Ascending aorta (tissue), 2 donors: ENCODE measurements at regions of chr7 and their contacts with region 1.

Region 1: GRCh38 chr7:26200444-26201246 is at the start of gene HNRNPA2B1:
- DNase-seq: peak; percentile 93 to 99
- H3K4me3 ChIP-seq: peak within 1 kb of the TSS; percentile 84 to 95
- H3K27ac ChIP-seq: peak within 1 kb of the TSS; percentile 99 to 100
- H3K4me1 ChIP-seq: peaks cover 0 to 43% of the 10 kb centered on the region in 2 donors
- H3K27me3 ChIP-seq: no peaks in the 10 kb centered on the region
- CTCF ChIP-seq: no peak
- total RNA-seq, gene HNRNPA2B1: 57.0 TPM

Region 2: DNA sequence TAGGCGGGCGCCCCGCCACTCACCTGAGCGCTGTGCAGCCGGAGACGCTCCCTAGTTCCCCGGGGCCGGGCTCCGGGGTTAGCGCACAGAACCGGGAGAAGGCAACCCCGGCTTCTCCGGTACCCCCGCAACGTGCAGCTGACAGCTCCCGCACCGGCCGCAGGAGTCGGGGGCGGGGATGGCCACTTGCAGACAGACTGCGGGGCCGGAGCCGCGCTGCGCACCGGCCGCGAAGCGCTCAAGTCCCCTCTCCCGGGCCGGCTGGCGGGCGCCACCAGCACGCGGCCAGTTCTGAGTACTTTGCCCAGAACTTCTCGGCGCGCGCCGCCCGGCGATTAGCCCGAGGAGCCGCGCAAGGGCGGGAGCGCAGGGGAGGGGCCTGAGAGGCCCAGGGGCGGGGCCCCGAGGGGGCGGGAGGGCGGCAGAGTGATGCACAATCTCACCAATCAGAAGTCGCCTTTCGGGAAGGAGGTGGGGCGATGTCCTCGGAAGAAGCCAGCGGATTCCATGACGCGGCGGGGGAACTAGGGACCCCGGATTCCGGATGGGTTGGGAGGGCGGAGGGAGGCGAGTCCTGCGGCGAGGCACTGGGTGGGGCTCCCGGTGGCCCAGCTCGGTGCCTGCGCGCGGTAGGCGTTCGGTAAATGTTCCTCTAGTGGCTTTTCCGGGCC is 1220.6 kb before region 1 on chr7 and contains the start of gene OSBPL3:
- intact Hi-C with region 1: loop called (anchors 10 kb)
- DNase-seq: peak; percentile 77 to 97
- H3K4me3 ChIP-seq: peak within 1 kb of the TSS; percentile 66 to 94
- H3K27ac ChIP-seq: peak within 1 kb of the TSS; percentile 66 to 83
- H3K4me1 ChIP-seq: peaks cover 0 to 3% of the 10 kb centered on the region in 2 donors
- H3K27me3 ChIP-seq: no peaks in the 10 kb centered on the region
- CTCF ChIP-seq: no peak
- total RNA-seq, gene OSBPL3: 0.96 TPM

Region 3: DNA sequence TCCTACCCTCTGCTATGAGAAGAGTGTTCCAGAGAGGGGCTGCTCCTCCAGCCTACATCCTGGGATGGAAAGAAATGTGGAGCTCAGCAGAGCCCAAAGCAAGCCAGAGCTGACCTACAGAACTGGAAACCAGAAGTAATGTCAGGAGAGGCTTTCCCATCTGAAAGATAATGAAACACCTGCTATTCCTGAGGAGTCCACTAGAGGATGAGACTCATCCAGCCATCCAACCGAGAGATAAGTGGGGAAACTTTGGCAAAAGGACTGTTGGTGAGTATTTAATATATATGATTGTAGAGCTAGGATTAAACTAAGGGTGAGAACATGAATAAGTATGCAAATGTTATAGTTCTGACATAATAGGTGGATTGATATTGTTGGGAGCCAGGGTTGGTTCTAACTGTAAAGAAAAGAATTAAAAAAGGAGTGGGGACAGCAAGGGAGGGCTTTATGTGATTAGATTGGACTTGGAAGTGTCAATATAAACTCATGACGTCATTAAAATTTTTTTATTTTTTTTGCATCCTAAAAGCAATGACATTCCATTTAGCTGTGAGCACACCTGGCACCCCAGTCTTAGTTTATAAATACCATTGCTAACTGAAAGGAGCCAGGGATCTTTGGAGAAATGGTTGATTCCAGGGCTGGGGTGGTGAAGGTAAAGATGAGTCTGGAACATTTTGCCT is 361.4 kb before region 1 on chr7:
- intact Hi-C with region 1: no loop called
- DNase-seq: no peak
- H3K4me3 ChIP-seq: no peak overlapping the region
- H3K27ac ChIP-seq: peak overlapping the region; percentile 42 to 71
- H3K4me1 ChIP-seq: peaks cover 11 to 42% of the 10 kb centered on the region in 2 donors
- H3K27me3 ChIP-seq: no peaks in the 10 kb centered on the region
- CTCF ChIP-seq: peak in 1 of 3 experiments; percentile 11

Region 4: GRCh38 chr7:25894902-25895791 is 305.5 kb before region 1 on chr7:
- intact Hi-C with region 1: loop called (anchors 10 kb)
- DNase-seq: peak in 1 of 2 donors; percentile 84
- H3K4me3 ChIP-seq: peak overlapping the region in 1 of 2 donors; percentile 29
- H3K27ac ChIP-seq: no peak overlapping the region
- H3K4me1 ChIP-seq: no peaks in the 10 kb centered on the region
- H3K27me3 ChIP-seq: peaks cover 7% of the 10 kb centered on the region
- CTCF ChIP-seq: peak; percentile 13 to 64 (median 59)

Region 5: DNA sequence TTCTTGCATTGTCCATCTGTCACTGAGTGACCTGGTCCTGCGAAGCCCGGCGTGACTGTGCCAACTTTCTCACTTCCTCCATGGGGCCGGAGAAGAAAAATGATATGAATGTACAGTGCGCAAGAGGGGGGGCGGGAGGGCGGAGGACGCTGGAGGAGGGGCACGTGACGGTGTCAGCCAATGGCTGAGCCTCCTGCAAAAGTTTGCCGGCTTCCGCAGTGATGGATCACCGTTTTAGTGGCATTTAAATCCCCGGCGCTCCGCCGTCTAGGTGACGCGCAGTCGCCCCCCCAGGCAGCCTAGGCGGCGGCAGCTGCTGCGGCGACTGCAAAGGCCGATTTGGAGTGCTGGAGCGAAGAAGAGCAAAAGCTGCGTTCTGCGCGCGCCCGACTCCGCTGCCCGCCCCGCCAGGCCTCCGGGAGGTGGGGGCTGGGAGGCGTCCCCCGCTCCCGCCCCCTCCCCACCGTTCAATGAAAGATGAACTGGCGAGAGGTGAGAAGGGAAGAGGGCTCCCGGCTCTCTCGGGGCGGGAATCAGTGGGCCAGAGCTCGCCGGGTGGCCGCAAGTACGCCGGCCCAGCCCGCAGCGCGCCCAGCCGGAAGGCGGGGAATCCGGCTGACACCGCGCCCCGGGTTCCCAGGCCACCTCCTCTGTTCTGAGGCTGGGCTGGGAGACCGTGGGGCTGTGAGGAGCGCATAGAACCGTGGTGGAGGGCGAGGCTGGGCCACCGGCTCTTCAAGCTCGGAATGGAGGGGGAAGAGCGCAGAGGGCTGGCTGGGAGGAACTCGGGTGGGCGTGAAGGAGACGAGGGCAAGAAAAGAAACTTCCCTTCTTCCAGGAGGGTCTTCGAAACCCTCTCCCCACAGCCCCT is 895.5 kb after region 1 on chr7 and contains the start of gene HOXA1:
- intact Hi-C with region 1: loop called (anchors 2 kb)
- DNase-seq: peak; percentile 44 to 94
- H3K4me3 ChIP-seq: peak within 1 kb of the TSS; percentile 79 to 82
- H3K27ac ChIP-seq: peak within 1 kb of the TSS; percentile 89 to 97
- H3K4me1 ChIP-seq: peaks cover 0 to 18% of the 10 kb centered on the region in 2 donors
- H3K27me3 ChIP-seq: no peaks in the 10 kb centered on the region
- CTCF ChIP-seq: no peak
- total RNA-seq, gene HOXA1: not detected

Region 6: GRCh38 chr7:27143023-27143949 is 942.6 kb after region 1 on chr7 and contains the start of gene HOXA5:
- intact Hi-C with region 1: loop called (anchors 2 kb)
- DNase-seq: peak; percentile 42 to 94
- H3K4me3 ChIP-seq: peak within 1 kb of the TSS; percentile 75 to 91
- H3K27ac ChIP-seq: peak within 1 kb of the TSS; percentile 92 to 98
- H3K4me1 ChIP-seq: peaks cover 0 to 5% of the 10 kb centered on the region in 2 donors
- H3K27me3 ChIP-seq: no peaks in the 10 kb centered on the region
- CTCF ChIP-seq: peak; percentile 88 to 97 (median 94)
- total RNA-seq, gene HOXA5: 22.0 TPM